PC-9 (cell line): ENCODE measurements at regions of chr4 and their contacts with region 1.

Region 1: GRCh38 chr4:54588404-54588803 is 69.4 kb upstream of the KIT start:
- DNase-seq: no peak
- H3K4me3 ChIP-seq: no peak overlapping the region
- H3K27ac ChIP-seq: no peak overlapping the region
- H3K4me1 ChIP-seq: no peaks in the 10 kb centered on the region
- H3K27me3 ChIP-seq: no peaks in the 10 kb centered on the region
- CTCF ChIP-seq: no peak

Region 2: DNA sequence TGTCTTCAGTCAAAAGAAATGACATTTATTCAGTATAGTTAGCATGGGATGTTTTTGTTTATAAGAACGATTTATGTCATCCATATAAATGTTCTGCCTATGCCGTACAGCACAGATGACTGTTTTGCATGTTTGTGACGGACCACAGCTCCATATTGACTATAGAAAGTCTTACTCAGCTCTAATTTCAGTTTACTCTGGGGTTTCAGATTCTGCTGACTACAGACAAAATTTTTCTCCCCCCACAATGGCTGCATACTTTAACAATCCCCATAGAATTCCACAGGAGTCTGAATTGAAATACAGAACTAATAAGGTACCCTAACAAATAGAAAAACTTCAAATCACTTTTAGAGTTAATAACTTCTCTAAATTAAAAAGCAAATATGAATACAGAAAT is 1413.6 kb before region 1 on chr4:
- CTCF ChIA-PET with region 1: no interaction called
- POLR2A ChIA-PET with region 1: no interaction called
- intact Hi-C with region 1: no loop called
- DNase-seq: no peak
- H3K4me3 ChIP-seq: no peak overlapping the region
- H3K27ac ChIP-seq: no peak overlapping the region
- H3K4me1 ChIP-seq: no peaks in the 10 kb centered on the region
- H3K27me3 ChIP-seq: no peaks in the 10 kb centered on the region
- CTCF ChIP-seq: no peak

Region 3: DNA sequence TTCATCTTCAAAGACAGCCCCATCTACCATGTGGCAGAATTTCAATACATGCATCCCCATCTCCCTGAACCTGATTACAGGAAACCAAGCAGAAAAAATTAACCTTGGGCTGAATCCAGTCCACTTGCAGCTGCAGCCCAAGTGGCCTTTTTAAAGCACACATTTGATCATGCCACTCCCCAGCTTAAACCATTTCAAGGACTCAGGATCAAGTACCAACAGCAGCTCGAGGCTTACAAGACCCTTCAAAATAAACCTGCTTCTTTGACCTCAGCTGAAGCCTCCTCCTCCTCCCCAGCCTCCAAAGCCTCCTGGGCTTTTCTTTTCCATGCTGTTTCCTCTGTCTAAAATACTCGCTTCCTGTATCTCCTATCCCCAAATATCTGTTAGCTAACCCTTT is 18.7 kb after region 1 on chr4:
- CTCF ChIA-PET with region 1: no interaction called
- POLR2A ChIA-PET with region 1: no interaction called
- intact Hi-C with region 1: loop called (anchors 1 kb)
- DNase-seq: no peak
- H3K4me3 ChIP-seq: no peak overlapping the region
- H3K27ac ChIP-seq: no peak overlapping the region
- H3K4me1 ChIP-seq: no peaks in the 10 kb centered on the region
- H3K27me3 ChIP-seq: no peaks in the 10 kb centered on the region
- CTCF ChIP-seq: no peak